HEK293 (cell line): ENCODE measurements at regions of chr3 and their contacts with region 1.

Region 1: GRCh38 chr3:51371943-51372557 is 13.0 kb upstream of the MANF start:
- H3K4me3 ChIP-seq: no peak overlapping the region
- H3K27ac ChIP-seq: no peak overlapping the region
- H3K4me1 ChIP-seq: no peaks in the 10 kb centered on the region
- CTCF ChIP-seq: peak; percentile 20; the same call in 1 of the 2 replicates

Region 2: GRCh38 chr3:50971487-50971924 is 400.5 kb before region 1 on chr3:
- CTCF ChIA-PET with region 1: interaction called, 21 read pairs
- POLR2A ChIA-PET with region 1: no interaction called
- H3K4me3 ChIP-seq: no peak overlapping the region
- H3K27ac ChIP-seq: no peak overlapping the region
- H3K4me1 ChIP-seq: no peaks in the 10 kb centered on the region
- CTCF ChIP-seq: no peak